SK-MEL-5 (cell line): ENCODE measurements at regions of chr14 and their contacts with region 1.

Region 1: GRCh38 chr14:103463149-103463548 is 59.5 kb downstream of the CKB start:
- DNase-seq: no peak

Region 2: DNA sequence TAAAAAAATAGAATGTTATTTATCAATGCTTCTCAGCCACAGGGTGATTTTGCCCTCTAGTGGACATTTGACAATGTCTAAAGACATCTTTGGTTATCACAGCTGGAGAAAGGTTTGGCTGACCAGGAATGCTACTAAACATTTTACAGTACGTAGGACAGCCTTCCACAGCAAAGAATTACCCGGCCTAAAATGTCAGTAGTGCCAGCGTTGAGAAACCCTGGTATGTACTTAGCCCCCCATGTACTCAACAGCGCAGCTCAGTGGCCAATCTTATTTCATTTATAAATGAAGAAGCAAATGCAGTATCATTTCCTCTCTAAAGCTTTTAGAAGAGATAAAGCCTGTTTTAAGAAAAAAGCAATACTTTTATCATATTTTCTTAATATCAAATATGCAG is 72.1 kb before region 1 on chr14:
- in situ Hi-C with region 1: loop called (anchors 10 kb)
- DNase-seq: peak; percentile 86